ENCODE measurements at regions of chr2 and their contacts with region 1.

Region 1: DNA sequence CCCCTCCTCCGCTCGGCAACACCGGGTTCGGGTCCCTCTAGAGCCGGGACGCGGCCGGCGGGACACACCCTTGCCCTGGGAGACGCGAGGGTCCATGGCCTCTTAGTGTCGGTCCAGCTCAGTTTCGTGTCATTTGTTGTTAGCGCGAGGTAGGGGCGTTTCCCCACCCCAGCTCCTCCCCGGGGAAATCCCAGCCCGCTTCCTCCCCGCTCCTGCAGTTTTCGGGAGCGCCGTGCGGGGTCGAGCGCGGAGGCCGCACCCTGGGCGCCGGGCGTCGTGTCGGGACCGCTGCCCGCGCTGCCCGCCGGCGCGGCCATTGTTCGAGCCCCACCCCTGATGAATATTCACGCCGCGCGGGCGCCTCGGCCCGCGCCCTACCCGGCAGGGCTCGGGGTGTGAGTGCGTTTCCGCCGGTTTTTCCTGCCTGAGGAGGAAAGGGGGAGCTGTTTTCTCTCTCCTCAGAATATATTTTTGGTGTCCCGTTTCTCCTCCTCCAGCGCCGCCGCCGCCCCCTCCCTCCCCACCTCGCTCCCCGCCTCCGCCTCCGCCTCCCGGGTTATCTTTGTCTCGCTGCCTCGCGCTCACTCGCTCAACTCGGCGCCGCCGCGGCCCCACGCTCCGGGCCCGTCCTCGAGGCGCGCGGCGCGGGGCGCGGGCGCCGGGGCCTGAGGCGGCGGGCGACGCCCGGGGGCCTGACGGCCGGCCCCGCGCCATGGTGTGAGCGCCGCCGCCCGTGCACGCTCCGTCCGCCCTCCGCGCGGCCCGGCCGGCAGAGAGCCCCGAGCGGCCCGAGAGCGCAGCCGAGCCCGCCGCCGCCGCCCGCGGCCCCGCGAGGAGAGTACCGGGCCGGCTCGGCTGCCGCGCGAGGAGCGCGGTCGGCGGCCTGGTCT is at the start of gene MAP4K4:
- ATAC-seq: peak; percentile 80 to 89 (median 86)
- H3K4me3 ChIP-seq: peak within 1 kb of the TSS; percentile 59 to 99 (median 89)
- H3K27ac ChIP-seq: peak within 1 kb of the TSS; percentile 90 to 96
- H3K4me1 ChIP-seq: peaks cover 7 to 12% of the 10 kb centered on the region in 2 donors
- total RNA-seq, gene MAP4K4: 72.4 to 551 (median 123) TPM

Region 2: DNA sequence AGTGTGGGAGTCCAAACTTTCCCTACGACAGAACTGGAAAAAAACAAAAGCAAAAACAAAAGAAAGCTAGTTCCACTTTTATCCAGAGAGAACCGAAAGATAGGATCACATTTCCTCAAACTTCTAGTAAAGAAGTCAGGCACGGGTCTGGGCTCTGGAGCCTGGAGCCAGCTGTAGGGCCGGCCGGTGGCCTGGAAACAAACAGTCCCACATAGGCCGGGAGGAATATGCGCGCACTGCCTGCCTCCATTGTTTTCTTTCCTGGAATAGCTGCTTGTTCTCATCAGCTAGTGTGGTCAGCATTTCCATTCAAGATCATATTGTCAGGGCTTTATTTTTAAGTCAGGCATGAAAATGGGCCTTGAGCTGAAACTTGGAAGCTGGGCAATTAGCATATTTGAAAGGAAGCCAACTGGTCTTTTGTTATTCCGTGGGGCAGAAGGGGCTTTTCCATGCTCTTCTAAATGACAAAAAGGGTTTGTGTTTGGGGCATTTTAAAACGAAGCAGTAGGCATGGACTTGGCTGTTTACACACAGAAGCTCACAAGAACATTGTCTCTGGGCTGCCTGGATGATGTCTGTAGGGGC is 163.7 kb before region 1 on chr2:
- in situ Hi-C with region 1: loop called in 1 of 9 experiments (anchors 25 kb)
- ATAC-seq: peak; percentile 54 to 97 (median 90)
- H3K4me3 ChIP-seq: no peak overlapping the region
- H3K27ac ChIP-seq: peak overlapping the region; percentile 62 to 63
- H3K4me1 ChIP-seq: peaks cover 4% of the 10 kb centered on the region in 2 donors

Region 3: GRCh38 chr2:101873543-101873942 is 176.2 kb after region 1 on chr2:
- in situ Hi-C with region 1: no loop called
- ATAC-seq: no peak
- H3K4me3 ChIP-seq: no peak overlapping the region
- H3K27ac ChIP-seq: no peak overlapping the region
- H3K4me1 ChIP-seq: no peaks in the 10 kb centered on the region

Measured in motor neuron (in vitro differentiated cells).